Right ventricle myocardium inferior (tissue), 1 donor: ENCODE measurements at regions of chr15 and their contacts with region 1.

Region 1: GRCh38 chr15:47196057-47196456 is 521.2 kb upstream of the SEMA6D start:
- DNase-seq: peak; percentile 75
- ATAC-seq: peak; percentile 95

Region 2: DNA sequence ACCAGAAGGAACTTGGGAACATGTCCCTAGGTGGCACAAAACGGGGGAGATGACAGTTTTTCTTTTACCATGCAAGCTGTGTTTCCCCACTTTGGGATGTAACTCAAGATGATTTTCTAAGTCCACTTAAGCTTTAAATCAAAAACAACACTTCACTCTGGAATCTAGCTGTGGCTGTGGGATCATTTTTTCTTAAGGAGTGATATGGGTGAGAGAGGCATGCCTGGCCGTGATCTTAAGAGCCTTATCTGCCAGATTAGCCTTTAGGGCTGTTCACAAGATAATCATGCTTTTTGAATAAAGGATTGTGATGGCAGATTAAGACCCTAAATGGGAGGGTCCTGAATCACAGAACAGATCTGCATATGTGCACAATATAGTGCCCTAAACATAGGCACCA is 136.4 kb after region 1 on chr15:
- intact Hi-C with region 1: no loop called
- DNase-seq: no peak
- ATAC-seq: no peak

Region 3: DNA sequence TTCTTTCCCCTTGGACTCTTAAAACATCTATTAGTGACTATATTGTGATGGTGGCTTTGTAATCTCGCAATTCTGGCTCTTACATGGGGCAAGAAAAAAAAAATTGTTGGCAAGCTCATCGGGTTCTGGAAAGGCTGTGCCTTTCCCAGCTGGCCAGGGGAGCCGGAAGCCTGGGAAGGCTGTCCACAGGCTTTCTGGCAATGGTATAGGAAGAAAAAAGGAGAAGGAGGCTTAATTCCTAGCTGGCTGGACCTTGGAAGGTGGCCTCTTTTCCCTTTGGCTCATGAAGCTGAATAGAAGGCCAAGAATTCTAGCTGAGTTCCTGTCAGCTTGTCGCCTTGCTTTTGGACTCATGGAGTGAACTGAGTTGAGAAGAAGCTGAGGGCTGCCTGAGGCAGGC is 277.8 kb after region 1 on chr15:
- intact Hi-C with region 1: loop called (anchors 10 kb)
- DNase-seq: peak; percentile 75
- ATAC-seq: peak; percentile 98

Region 4: DNA sequence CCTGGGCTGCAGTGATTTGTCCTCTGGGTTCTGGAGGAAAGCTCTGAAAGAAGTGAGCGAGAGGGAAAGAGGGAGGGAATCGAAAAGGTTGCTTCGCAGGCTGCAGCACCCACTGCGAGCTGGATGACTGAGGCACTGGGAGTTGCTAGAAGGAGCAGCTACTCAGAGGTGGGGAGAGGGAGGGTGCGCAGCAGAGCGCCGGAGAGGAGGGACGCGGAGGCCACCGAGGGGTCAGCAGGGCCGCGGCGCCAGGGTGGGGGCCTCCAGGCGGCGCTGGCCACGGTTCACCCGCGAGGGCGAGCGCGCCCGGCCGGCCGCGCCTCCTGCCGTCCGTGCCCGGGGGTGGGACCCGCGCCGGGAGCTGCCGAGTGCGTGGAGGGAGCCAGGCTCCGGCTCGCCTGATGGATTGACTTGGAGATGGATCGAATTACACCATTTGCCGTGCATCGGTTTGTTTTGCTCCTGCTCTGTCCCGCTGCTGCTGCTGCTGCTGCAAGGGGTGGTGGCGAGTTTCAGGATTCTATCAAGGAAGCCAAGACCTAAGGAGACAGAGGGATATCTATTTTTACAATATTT is 521.1 kb after region 1 on chr15 and contains the start of gene SEMA6D:
- intact Hi-C with region 1: loop called (anchors 10 kb)
- DNase-seq: peak; percentile 84
- ATAC-seq: peak; percentile 87
- total RNA-seq, gene SEMA6D: 17.7 TPM

Region 5: GRCh38 chr15:48250640-48251076 is 1054.6 kb after region 1 on chr15:
- intact Hi-C with region 1: loop called (anchors 10 kb)
- DNase-seq: no peak
- ATAC-seq: no peak

Region 6: DNA sequence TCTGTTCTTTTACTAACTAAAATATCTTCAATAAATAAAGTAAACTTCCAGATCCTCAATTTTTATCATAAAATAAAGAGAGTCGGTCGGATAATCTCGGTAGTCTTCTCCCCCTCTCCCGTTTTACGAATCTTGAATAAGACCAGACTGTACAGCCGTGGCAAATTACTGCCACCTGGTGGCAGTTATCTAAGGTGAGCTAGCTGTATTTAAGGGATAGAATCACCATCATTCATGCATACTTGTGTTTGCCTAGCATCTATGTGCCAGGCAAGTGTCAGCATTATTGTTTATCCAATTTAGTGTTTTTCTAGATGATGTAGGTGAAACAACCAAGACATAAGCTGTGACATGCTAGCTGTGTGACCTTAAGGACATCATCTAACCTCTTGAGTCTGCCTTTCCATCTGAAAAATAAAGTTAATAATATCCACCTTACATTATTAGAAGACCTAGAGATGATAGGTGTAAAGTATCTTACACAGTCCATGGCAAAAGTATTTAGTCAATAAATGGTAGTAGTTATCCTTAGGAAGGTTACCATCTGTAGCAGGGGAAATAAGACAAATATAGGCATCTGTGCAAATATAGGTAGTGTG is 1156.5 kb after region 1 on chr15:
- intact Hi-C with region 1: loop called (anchors 10 kb)
- DNase-seq: no peak
- ATAC-seq: no peak